Activated CD8-positive, alpha-beta T cell treated with anti-CD3 and anti-CD28 coated beads, Interleukin-2, amount 10 ng/mL, durations not matched to agents 7 days and 5 days (primary cell): ENCODE measurements at regions of chr2 and their contacts with region 1.

Region 1: DNA sequence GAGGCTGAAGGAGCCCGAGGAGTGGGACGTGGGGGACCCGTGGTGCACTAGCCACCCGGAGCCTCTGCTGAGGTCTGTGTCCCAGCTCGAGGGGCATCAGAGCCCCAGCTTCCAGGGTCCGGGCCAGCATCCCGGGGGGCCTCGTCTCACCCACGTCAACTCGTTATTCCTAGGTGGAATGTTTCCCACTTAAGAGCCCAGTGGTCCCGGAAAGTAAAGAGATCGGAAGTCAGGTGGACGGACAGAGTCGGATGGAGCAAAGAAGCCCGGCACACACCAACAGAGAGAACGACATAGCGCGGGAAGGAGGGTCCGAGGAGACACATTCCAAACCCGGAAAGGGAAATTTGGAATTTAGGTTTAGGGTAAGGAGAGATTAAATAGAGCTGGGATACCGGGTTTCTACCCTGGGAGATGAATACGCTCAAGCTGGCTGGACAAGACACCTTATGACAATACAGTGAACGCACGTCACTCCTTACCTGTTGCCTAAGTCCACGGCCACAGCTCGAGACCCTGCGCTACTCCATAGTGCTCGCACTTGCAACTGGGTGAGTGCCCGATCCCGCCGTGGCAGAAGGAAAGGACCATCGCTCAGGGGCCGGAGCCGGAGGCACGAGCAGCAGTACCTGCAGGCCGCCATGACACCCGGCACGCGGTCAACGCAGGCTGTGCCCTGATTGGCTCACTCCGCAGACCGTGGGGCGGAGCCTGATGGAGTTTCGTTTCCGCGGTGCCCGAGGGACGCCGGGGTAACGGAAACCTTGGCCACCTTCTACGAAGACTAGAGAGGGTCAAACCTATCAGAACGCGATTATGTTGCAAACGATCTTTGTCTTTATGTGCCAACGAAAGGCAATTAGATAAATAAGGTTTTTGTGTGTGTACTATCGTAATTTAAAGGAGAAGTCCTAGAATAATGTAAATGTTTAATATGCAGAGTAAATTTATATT is at the start of gene PNPT1:
- DNase-seq: peak; percentile 96
- ATAC-seq: peak; percentile 100
- H3K4me3 Mint-ChIP-seq: peak within 1 kb of the TSS; percentile 98
- H3K27ac Mint-ChIP-seq: peak within 1 kb of the TSS; percentile 98
- H3K4me1 Mint-ChIP-seq: peaks cover 34% of the 10 kb centered on the region
- H3K27me3 Mint-ChIP-seq: peaks cover 3% of the 10 kb centered on the region
- total RNA-seq, gene PNPT1: 37.6 to 38.4 TPM

Region 2: DNA sequence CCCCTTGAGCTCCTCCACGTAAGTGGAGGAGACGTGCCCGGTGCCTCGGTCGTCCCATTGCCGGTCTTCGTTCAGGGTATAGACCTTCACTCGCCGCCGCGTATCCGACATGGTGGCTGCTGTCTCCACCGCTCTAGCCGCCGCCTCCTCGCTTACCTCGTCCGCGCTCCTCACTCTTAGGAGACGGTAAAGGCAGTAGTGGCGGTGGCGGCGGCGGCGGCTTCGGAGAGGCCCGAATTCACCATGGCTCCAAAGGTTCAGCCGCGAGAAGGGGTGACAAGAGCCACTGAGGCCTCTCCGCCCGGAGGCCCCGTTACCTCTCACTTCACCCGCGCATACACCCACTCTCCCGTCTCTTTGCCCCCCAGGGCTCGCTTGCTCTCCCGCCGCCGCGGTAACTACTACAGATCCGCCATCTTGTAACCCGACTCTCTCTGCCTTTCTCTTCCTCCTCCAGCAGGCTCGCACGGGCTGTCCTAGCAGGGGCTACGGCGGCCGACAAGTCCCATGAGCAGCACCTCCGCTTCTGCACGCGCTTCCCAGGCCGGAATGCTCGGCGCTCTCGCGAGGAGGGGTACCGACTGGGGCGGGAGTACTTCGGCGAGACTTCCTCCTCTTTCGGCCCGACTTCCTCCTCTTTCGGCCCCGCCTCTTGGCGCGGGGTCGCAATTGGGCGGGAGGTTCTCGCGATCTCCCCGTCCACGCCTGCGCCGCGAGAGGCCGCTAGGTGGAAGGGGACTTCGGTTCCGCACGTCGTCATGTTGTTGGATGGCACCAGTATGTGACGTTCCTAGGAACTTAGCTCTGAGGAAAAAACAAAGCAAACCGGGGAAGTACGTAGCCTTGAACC is 76.1 kb before region 1 on chr2 and contains the start of gene PPP4R3B:
- CTCF ChIA-PET with region 1: no interaction called
- POLR2A ChIA-PET with region 1: interaction called, 16 read pairs
- DNase-seq: peak; percentile 99
- ATAC-seq: peak; percentile 91
- H3K4me3 Mint-ChIP-seq: no peak within 1 kb of the TSS
- H3K27ac Mint-ChIP-seq: no peak within 1 kb of the TSS
- H3K4me1 Mint-ChIP-seq: peaks cover 46% of the 10 kb centered on the region
- H3K27me3 Mint-ChIP-seq: no peaks in the 10 kb centered on the region
- total RNA-seq, gene PPP4R3B: 67.6 to 68.2 TPM

Region 3: DNA sequence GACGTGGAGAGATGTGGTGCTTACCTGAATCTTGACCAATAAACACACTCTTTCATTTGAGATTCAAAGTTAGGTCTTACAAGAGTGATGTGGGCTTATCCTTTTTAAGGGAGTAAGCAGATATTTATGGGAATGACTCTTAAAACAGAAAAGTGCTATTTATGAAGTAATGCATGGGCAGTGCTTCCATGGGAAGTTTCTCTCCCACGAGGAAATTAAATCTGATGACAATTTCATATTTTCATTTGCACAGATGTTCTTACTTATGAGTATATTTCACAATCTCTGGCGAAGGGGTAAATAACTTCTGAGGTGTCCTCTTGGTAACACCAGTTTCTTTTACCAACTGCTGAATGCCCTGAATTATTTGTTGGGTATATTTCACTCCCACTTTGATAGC is 20.8 kb before region 1 on chr2:
- CTCF ChIA-PET with region 1: no interaction called
- POLR2A ChIA-PET with region 1: no interaction called
- DNase-seq: no peak
- ATAC-seq: no peak
- H3K4me3 Mint-ChIP-seq: no peak overlapping the region
- H3K27ac Mint-ChIP-seq: no peak overlapping the region
- H3K4me1 Mint-ChIP-seq: no peaks in the 10 kb centered on the region
- H3K27me3 Mint-ChIP-seq: no peaks in the 10 kb centered on the region

Region 4: GRCh38 chr2:56952871-56953270 is 1259.4 kb after region 1 on chr2:
- CTCF ChIA-PET with region 1: no interaction called
- POLR2A ChIA-PET with region 1: no interaction called
- DNase-seq: no peak
- ATAC-seq: no peak
- H3K4me3 Mint-ChIP-seq: no peak overlapping the region
- H3K27ac Mint-ChIP-seq: no peak overlapping the region
- H3K4me1 Mint-ChIP-seq: no peaks in the 10 kb centered on the region
- H3K27me3 Mint-ChIP-seq: no peaks in the 10 kb centered on the region